ENCODE measurements at regions of chr5 and their contacts with region 1.

Region 1: GRCh38 chr5:151051066-151051930 is 29.5 kb downstream of the TNIP1 start:
- DNase-seq: peak; percentile 59
- ATAC-seq: peak; percentile 89
- H3K4me3 Mint-ChIP-seq: no peak overlapping the region
- H3K27ac Mint-ChIP-seq: peak overlapping the region; percentile 76
- H3K4me1 Mint-ChIP-seq: peaks cover 37% of the 10 kb centered on the region
- H3K27me3 Mint-ChIP-seq: no peaks in the 10 kb centered on the region
- CTCF ChIP-seq: peak; percentile 41

Region 2: GRCh38 chr5:151020304-151021110 is 30.8 kb before region 1 on chr5 and contains the start of gene GPX3:
- CTCF ChIA-PET with region 1: no interaction called
- POLR2A ChIA-PET with region 1: no interaction called
- intact Hi-C with region 1: no loop called
- DNase-seq: peak; percentile 41
- ATAC-seq: peak; percentile 72
- H3K4me3 Mint-ChIP-seq: peak within 1 kb of the TSS; percentile 74
- H3K27ac Mint-ChIP-seq: no peak within 1 kb of the TSS
- H3K4me1 Mint-ChIP-seq: peaks cover 20% of the 10 kb centered on the region
- H3K27me3 Mint-ChIP-seq: no peaks in the 10 kb centered on the region
- CTCF ChIP-seq: no peak
- total RNA-seq, gene GPX3: 0.18 and 0.76 TPM in 2 replicates

Region 3: DNA sequence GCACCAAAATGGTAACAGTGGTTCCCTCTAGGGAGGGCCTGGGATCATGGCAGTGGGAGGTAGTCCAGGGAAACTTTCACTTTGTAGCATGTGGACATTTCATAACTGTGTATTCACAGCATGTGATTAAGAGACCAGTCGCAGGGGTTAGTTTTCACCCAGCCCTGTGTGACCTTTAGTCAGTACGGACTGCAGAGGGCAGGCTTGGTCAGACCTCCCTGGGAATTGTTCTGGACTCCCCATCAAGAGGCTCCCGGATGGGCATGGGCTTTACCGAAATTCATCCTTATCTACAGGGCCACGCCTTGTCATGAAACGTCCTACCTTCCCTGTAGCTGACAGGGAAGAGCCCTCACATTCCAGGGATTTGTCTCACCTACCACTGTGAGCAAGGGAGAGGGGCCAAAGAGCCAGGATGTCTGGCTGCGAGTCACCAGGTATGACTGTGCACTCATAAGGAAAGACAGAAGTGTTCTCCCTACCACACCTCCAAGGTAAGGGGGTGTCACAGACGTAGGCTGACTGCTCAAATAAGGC is 11.0 kb before region 1 on chr5:
- CTCF ChIA-PET with region 1: interaction called, 10 read pairs
- POLR2A ChIA-PET with region 1: no interaction called
- intact Hi-C with region 1: no loop called
- DNase-seq: no peak
- ATAC-seq: no peak
- H3K4me3 Mint-ChIP-seq: no peak overlapping the region
- H3K27ac Mint-ChIP-seq: no peak overlapping the region
- H3K4me1 Mint-ChIP-seq: no peaks in the 10 kb centered on the region
- H3K27me3 Mint-ChIP-seq: no peaks in the 10 kb centered on the region
- CTCF ChIP-seq: no peak

Region 4: GRCh38 chr5:151068433-151069197 is 17.3 kb after region 1 on chr5:
- CTCF ChIA-PET with region 1: interaction called, 13 read pairs
- POLR2A ChIA-PET with region 1: interaction called, 4 read pairs
- intact Hi-C with region 1: no loop called
- DNase-seq: peak; percentile 62
- ATAC-seq: peak; percentile 86
- H3K4me3 Mint-ChIP-seq: peak overlapping the region; percentile 72
- H3K27ac Mint-ChIP-seq: peak overlapping the region; percentile 91
- H3K4me1 Mint-ChIP-seq: peaks cover 99% of the 10 kb centered on the region
- H3K27me3 Mint-ChIP-seq: no peaks in the 10 kb centered on the region
- CTCF ChIP-seq: no peak

Region 5: GRCh38 chr5:151086905-151087360 is 35.6 kb after region 1 on chr5:
- CTCF ChIA-PET with region 1: interaction called, 12 read pairs
- POLR2A ChIA-PET with region 1: interaction called, 215 read pairs
- intact Hi-C with region 1: no loop called
- DNase-seq: peak; percentile 57
- ATAC-seq: peak; percentile 86
- H3K4me3 Mint-ChIP-seq: peak overlapping the region; percentile 83
- H3K27ac Mint-ChIP-seq: peak overlapping the region; percentile 76
- H3K4me1 Mint-ChIP-seq: peaks cover 70% of the 10 kb centered on the region
- H3K27me3 Mint-ChIP-seq: no peaks in the 10 kb centered on the region
- CTCF ChIP-seq: no peak

Region 6: DNA sequence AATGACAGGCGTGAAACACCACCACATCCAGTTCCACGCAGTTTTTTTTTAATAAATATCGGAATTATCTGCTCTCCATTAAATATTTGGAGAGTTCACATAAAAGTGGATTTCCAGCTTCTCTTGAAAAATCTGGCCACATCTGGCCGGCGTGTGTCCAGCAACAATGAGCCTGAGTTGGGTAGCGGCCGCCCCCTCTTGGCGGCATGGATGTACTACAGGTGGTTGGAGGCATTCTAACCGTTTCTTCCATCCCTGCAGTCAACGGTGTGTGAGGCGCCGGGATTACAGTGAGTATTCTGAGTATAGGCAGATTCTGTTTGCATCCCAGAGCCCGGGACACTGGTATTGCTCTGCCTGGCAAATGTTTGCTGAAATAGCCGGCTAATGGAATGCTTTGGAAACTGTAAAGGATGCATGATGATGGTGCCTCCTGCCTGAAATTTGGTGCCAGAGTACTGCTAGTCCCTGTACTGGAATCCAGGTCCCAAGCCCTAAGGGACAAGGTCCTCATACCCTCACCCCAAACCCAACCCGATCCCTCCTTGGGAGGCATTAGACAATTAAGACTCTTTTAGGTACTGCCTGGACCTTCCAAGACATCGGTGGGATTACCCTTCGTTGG is 188.1 kb after region 1 on chr5:
- CTCF ChIA-PET with region 1: interaction called, 14 read pairs
- POLR2A ChIA-PET with region 1: no interaction called
- intact Hi-C with region 1: loop called (anchors 2 kb)
- DNase-seq: peak; percentile 58
- ATAC-seq: peak; percentile 60
- H3K4me3 Mint-ChIP-seq: peak overlapping the region; percentile 77
- H3K27ac Mint-ChIP-seq: peak overlapping the region; percentile 72
- H3K4me1 Mint-ChIP-seq: peaks cover 95% of the 10 kb centered on the region
- H3K27me3 Mint-ChIP-seq: no peaks in the 10 kb centered on the region
- CTCF ChIP-seq: peak; percentile 85